ENCODE measurements at regions of chr16 and their contacts with region 1.

Region 1: DNA sequence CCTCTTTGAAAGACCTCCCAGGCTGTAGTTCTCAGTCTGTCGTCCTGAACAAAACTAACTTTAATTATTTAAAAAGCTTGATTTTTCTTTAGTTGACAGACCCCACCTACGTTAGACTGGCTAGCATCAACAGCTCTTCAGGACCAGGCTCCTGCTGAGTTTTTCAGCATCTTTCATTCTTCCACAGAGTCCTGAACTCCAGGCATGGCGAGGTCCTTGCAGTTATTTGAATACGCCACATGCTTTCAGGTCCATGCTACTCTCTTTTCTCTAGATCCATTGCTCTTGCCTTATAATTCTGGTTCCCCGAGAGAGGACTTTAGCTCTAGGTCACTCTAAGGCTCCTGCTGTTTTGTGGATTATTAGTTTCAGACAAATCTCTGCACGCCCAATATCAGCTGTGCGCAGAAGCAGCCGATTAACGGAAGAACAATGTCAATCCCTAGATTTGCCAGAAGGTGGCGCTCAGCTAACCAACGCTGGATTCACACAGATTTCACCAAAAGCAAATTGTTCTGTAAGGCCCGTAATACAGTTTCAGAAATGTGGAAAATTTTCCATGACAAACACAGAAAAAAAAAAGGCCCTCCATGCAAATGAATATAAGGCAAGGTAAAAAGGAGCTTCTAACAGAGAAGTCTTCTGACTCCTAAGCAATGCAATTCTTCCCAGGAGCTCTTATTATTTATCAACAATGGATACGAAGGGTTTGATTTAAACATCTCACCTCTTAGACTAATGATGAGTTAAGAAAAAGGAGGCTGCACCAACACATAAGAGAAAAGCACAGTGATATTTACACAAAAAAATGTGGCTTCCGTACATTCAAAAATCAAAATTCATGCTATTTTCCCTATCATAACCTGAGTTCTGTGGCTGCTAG is 33.5 kb upstream of the BCO1 start:
- DNase-seq: peak; percentile 36
- H3K4me3 ChIP-seq: no peak overlapping the region
- H3K27ac ChIP-seq: no peak overlapping the region
- H3K4me1 ChIP-seq: peaks cover 0 to 4% (median 1%) of the 10 kb centered on the region in 4 donors
- H3K27me3 ChIP-seq: no peaks in the 10 kb centered on the region
- CTCF ChIP-seq: peak; percentile 46 to 78 (median 74)
- EP300 ChIP-seq: no peak
- POLR2A ChIP-seq: no peak

Region 2: DNA sequence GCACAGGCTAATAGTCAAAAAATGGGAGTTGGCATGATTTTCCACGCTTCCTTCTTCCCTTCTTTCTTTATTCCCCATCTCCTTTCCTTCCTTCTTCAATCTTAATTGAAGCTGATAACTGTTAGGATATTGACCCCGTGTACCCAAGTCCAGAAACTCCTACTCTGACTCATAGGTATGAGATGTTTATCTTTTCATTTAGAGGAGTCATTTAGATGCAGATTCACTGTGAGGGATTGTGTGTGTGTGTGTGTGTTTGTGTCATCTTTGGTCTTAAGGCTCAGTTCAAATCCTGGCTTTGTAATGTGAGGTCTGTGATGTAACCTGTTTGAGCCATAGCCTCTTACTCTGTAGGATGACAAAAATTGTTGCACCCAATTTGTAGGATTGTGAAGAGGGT is 1272.5 kb before region 1 on chr16:
- in situ Hi-C with region 1: no loop called
- intact Hi-C with region 1: no loop called
- DNase-seq: no peak
- H3K4me3 ChIP-seq: no peak overlapping the region
- H3K27ac ChIP-seq: no peak overlapping the region
- H3K4me1 ChIP-seq: peaks cover 0 to 5% (median 2%) of the 10 kb centered on the region in 4 donors
- H3K27me3 ChIP-seq: no peaks in the 10 kb centered on the region
- CTCF ChIP-seq: no peak
- EP300 ChIP-seq: no peak
- POLR2A ChIP-seq: no peak

Region 3: DNA sequence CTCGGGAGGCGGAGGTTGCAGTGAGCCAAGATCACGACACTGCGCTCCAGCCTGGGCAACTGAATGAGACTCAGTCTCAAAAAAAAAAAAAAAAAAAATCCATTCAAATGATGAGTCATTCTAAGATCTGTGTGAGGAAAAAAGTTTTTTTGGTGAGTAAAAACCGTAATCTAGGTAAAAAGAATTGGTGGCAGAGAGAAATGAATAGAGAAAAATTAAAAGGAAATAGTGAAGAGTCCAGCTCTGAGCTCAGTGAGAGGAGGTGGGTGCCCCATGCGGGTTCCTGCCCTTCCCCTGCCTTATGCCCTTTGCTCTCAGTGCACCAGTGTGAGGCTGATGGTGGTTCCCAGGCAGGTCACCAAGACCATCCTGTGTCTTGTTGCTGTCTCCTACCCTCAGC is 130.6 kb after region 1 on chr16:
- in situ Hi-C with region 1: no loop called
- intact Hi-C with region 1: loop called (anchors 10 kb)
- DNase-seq: no peak
- H3K4me3 ChIP-seq: no peak overlapping the region
- H3K27ac ChIP-seq: no peak overlapping the region
- H3K4me1 ChIP-seq: no peaks in the 10 kb centered on the region
- H3K27me3 ChIP-seq: no peaks in the 10 kb centered on the region
- CTCF ChIP-seq: no peak
- EP300 ChIP-seq: no peak
- POLR2A ChIP-seq: no peak

Measured in transverse colon (tissue), 4 donors.